ENCODE measurements at regions of chr7 and their contacts with region 1.

Region 1: DNA sequence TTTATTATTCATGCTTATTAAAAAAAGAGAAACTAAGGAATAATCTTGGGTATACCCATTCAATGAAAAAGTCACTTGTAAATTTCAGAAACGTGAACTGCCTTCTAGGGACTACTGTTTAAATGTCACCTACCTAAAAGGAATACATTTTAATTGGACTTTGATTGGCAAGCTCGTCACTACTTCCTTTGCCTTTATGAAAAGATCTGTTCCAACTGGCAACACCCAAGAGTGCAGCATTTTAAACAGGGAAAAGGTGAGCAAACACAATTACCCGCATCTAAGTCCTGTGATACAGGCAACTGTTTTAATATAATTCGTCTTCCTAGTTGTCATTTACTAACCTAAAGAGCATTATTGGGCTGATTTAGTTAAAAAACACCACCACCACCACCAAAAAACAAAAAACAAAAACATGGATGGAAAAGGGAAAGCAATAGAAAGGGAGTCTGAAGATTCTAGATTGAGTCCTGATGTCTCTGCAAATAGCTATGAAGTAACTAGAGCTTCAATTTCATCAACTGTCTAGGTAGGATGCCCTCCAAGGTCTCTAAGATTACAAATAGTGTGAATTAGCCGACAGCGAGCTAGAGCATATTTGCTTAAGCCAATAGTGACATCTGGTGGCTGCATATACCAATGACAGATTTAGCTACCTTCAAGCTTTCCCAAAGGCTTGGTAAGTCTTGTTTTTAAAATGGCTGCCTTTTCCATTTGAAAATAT is 33.8 kb upstream of the ICA1 start:
- DNase-seq: no peak
- ATAC-seq: peak; percentile 95

Region 2: DNA sequence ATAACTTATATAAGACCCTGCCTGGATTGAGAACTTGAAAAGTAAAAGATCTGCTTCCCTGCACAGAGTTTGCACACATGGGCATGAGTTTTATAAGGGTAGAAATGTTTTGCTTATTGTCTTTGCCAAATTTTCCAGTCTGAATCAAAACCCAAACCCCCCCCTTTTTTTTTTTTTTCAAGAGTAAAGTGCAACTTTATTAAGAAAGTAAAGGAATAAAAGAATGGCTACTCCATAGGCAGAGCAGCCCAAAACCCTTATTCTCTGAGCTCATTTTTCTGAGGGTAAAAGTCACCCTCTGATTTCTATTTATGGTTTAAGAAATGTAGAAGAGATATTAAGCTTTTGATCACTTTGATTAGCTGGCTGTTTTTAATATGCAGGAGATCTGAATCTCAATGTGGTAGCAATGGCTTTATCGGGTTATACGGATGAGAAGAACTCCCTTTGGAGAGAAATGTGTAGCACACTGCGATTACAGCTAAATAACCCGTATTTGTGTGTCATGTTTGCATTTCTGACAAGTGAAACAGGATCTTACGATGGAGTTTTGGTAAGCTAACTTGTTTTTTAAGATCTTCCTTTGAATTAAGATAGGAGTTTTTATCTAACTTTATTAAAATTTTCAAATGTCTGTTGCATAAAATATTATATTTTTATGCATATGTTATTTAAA is 710.4 kb before region 1 on chr7:
- intact Hi-C with region 1: loop called (anchors 5 kb)
- DNase-seq: no peak
- ATAC-seq: no peak

Region 3: GRCh38 chr7:8161364-8161828 is 134.4 kb before region 1 on chr7:
- intact Hi-C with region 1: no loop called
- DNase-seq: no peak
- ATAC-seq: no peak

Region 4: DNA sequence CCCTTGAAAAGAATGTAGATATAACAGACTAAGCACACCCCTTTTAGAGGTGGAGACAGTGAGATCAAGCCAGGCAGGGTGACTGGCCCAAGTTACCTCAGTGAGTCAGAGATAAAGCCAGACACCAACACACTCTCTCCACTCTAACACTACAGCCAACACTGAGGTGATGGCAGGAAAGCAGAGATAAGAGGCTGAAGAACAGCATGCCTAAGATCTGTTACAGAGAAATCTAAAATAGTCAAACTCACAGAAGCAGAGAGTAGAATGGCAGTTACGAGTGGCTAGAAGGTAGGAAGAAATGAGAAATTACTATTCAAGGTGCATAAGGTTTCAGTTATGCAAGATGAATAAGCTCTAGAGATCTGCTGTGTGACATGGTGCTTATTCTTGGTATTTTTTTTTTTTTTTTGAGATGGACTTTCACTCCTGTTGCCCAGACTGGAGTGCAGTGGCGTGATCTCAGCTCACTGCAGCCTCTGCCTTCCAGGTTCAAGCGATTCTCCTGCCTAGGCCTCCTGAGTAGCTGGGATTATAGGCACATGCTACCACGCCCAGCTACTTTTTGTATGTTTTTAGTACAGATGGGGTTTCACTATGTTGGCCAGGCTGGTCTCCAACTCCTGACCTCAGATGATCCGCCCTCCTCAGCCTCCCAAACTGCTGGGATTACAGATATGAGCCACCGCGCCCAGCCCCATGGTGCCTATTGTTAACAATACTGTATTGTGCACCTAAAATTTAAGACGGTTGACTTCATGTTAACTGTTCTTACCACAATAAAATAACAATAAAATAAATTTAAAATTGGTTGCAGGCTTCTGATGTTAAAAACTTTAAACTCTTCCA is 62.6 kb before region 1 on chr7:
- intact Hi-C with region 1: loop called (anchors 10 kb)
- DNase-seq: no peak
- ATAC-seq: peak; percentile 96

Region 5: DNA sequence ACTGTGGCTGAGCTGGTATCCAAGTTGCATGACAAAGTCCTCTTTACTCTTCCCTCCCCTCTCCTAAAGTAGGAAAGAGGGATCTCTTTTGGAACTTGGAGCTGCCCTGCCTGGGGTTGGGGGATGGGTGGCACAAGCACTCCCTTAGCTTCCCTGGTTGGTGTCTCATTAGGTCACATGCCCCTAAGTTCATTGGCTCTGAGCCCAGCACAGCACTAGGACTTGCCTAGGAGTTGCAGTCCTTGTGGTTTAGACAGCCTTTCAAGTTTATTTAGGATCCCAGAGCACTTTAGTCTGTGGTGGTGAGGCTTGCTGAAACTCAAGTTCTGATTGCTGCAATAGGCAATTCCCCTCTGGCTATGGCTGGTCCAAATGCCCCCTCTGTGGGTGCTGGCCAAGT is 419.0 kb after region 1 on chr7:
- intact Hi-C with region 1: no loop called
- DNase-seq: no peak
- ATAC-seq: no peak

Measured in left ventricle myocardium superior (tissue), 1 donor.